OCI-LY7 (cell line): ENCODE measurements at regions of chr1 and their contacts with region 1.

Region 1: DNA sequence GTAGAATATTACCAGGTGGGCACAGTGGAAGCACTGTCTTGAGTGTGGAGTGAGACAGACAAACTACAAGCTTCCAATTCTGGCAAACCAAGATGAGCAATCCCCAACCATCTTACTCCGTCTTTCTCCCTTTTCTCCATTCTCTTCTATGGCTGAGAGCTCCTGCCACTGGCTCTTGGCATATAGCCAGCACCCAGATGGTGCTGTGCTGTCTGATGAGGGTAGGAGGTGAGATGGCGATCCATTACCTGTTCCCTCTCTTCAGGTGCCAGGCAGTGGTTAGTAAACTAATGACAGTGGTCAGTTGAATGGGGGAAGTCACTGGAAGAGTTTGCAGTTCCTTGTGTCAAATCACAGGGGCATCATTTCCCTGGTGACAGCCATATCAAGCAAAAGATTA is 108.4 kb downstream of the FNBP1L start:
- DNase-seq: no peak
- H3K4me3 ChIP-seq: no peak overlapping the region
- H3K27ac ChIP-seq: no peak overlapping the region
- H3K4me1 ChIP-seq: no peaks in the 10 kb centered on the region
- CTCF ChIP-seq: no peak

Region 2: GRCh38 chr1:93304716-93305138 is 251.6 kb before region 1 on chr1:
- CTCF ChIA-PET with region 1: no interaction called
- POLR2A ChIA-PET with region 1: no interaction called
- intact Hi-C with region 1: loop called (anchors 5 kb)
- DNase-seq: peak; percentile 78
- H3K4me3 ChIP-seq: no peak overlapping the region
- H3K27ac ChIP-seq: no peak overlapping the region
- H3K4me1 ChIP-seq: no peaks in the 10 kb centered on the region
- CTCF ChIP-seq: peak; percentile 98